ENCODE measurements at regions of chr2 and their contacts with region 1.

Region 1: GRCh38 chr2:152782171-152782570 is 63.8 kb downstream of the ARL6IP6 start:
- DNase-seq: no peak
- H3K4me3 ChIP-seq: no peak overlapping the region
- H3K27ac ChIP-seq: no peak overlapping the region
- H3K4me1 ChIP-seq: no peaks in the 10 kb centered on the region
- H3K27me3 ChIP-seq: peaks cover 3% of the 10 kb centered on the region
- CTCF ChIP-seq: no peak

Region 2: GRCh38 chr2:152432206-152432653 is 349.9 kb before region 1 on chr2:
- CTCF ChIA-PET with region 1: no interaction called
- POLR2A ChIA-PET with region 1: interaction called, 10 read pairs
- intact Hi-C with region 1: no loop called
- DNase-seq: peak; percentile 97
- H3K4me3 ChIP-seq: no peak overlapping the region
- H3K27ac ChIP-seq: peak overlapping the region; percentile 90
- H3K4me1 ChIP-seq: peaks cover 88% of the 10 kb centered on the region
- H3K27me3 ChIP-seq: no peaks in the 10 kb centered on the region
- CTCF ChIP-seq: no peak

Measured in A673 (cell line).